Panc1 (cell line): ENCODE measurements at regions of chr1 and their contacts with region 1.

Region 1: DNA sequence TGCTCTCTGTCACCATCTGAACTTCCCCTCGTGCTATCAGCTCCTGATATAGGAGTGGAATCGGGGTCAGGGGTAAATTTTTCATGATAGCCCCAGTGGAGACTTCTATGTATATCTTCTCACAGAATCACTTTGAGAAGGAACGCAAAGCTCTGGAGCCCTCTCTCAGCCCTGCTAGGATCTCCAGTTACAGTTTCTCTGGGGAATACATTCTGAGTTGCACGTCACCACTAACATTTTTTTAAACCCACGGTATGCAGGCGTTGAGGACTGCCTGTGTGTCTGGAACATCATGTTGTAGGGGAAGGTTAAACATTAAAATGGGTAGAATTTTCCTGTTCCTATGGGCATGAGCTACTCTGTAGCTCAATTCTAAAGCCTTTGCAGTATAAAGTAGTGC is 116.4 kb upstream of the FAM78B start:
- DNase-seq: no peak
- ATAC-seq: no peak
- H3K4me3 ChIP-seq: no peak overlapping the region
- H3K27ac ChIP-seq: no peak overlapping the region
- H3K4me1 ChIP-seq: no peaks in the 10 kb centered on the region; the same call in 1 of the 2 replicates
- H3K27me3 ChIP-seq: no peaks in the 10 kb centered on the region; the same call in 1 of the 2 replicates
- CTCF ChIP-seq: no peak

Region 2: GRCh38 chr1:165862448-165862847 is 420.7 kb before region 1 on chr1:
- CTCF ChIA-PET with region 1: no interaction called
- POLR2A ChIA-PET with region 1: no interaction called
- in situ Hi-C with region 1: no loop called
- intact Hi-C with region 1: no loop called
- DNase-seq: no peak
- ATAC-seq: no peak
- H3K4me3 ChIP-seq: no peak overlapping the region
- H3K27ac ChIP-seq: no peak overlapping the region
- H3K4me1 ChIP-seq: peaks cover 5% of the 10 kb centered on the region
- H3K27me3 ChIP-seq: no peaks in the 10 kb centered on the region
- CTCF ChIP-seq: no peak

Region 3: GRCh38 chr1:166391279-166392066 is 108.3 kb after region 1 on chr1:
- CTCF ChIA-PET with region 1: no interaction called
- POLR2A ChIA-PET with region 1: interaction called, 17 read pairs
- in situ Hi-C with region 1: no loop called
- intact Hi-C with region 1: no loop called
- DNase-seq: no peak
- ATAC-seq: no peak
- H3K4me3 ChIP-seq: no peak overlapping the region
- H3K27ac ChIP-seq: no peak overlapping the region
- H3K4me1 ChIP-seq: no peaks in the 10 kb centered on the region
- H3K27me3 ChIP-seq: no peaks in the 10 kb centered on the region
- CTCF ChIP-seq: no peak